ENCODE measurements at regions of chr1 and their contacts with region 1.

Region 1: GRCh38 chr1:234670967-234671626 is 61.1 kb upstream of the IRF2BP2 start:
- DNase-seq: no peak

Region 2: DNA sequence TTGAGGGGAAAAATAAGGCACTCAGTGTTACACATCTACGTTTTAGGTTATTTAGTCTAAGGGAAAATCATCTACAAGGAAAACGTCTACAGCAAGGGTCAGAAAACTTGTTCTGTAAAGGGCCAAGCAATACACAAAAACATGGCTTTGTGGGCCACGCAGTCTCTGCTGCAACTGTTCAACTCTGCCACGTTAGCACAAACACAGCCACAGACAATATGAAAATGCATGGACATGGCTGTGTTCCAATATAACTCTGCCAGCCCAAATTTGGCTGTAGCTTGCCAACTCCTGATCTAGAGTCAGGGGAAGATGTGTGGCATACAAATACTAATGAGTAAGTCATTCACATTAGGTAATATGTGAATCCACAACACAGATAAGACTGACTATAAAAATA is 257.1 kb before region 1 on chr1:
- intact Hi-C with region 1: no loop called
- DNase-seq: no peak

Region 3: DNA sequence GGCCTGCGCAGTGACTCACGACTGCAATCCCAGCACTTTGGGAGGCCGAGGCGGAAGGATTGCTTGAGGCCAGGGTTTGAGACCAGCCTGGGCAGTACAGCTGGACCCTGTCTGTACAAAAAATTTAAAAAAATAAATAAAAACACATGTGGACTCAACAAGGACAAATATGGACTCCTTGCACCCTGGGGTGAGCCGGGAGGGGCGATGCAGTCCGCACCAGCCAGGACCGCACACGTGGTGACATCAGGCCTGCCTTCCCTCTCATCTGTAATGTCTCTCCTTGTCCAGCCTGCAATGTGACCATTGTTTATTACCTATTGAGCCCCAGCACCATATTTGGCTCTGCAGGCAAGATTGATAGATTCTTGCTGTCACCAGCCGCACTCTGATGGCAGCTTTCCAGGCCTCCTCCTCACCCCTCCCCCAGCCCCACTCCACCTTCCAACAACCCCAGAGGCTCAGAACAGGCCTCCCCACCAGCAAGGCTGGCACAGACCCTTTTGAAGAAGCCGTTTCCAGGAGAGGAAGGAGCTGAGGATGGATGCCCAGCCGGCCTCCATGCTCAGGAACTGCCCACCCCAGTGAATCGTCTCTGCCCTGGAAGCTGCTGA is 116.3 kb before region 1 on chr1:
- intact Hi-C with region 1: no loop called
- DNase-seq: peak in 4 of 42 donors; percentile 8 to 37 (median 22)

Region 4: GRCh38 chr1:234716908-234717375 is 45.8 kb after region 1 on chr1:
- intact Hi-C with region 1: loop called (anchors 5 kb)
- DNase-seq: peak in 13 of 42 donors; percentile 19 to 68 (median 54)

Region 5: GRCh38 chr1:234727018-234727940 is 56.2 kb after region 1 on chr1:
- intact Hi-C with region 1: no loop called
- DNase-seq: no peak

Measured in head of caudate nucleus (tissue), 42 donors.